ENCODE measurements at regions of chr6 and their contacts with region 1.

Region 1: GRCh38 chr6:5507131-5507681 is 245.9 kb downstream of the FARS2 start:
- DNase-seq: peak in 1 of 2 donors; percentile 51
- ATAC-seq: peak; percentile 83 to 93 (median 85)
- H3K4me3 ChIP-seq: peak overlapping the region; percentile 16
- H3K4me3 Mint-ChIP-seq: peak overlapping the region; percentile 87
- H3K27ac ChIP-seq: peak overlapping the region; percentile 76
- H3K27ac Mint-ChIP-seq: peak overlapping the region; percentile 89 to 90
- H3K4me1 ChIP-seq: peaks cover 23% of the 10 kb centered on the region
- H3K4me1 Mint-ChIP-seq: peaks cover 38 to 51% of the 10 kb centered on the region in 2 donors
- H3K27me3 ChIP-seq: no peaks in the 10 kb centered on the region
- H3K27me3 Mint-ChIP-seq: no peaks in the 10 kb centered on the region
- CTCF ChIP-seq: no peak

Region 2: DNA sequence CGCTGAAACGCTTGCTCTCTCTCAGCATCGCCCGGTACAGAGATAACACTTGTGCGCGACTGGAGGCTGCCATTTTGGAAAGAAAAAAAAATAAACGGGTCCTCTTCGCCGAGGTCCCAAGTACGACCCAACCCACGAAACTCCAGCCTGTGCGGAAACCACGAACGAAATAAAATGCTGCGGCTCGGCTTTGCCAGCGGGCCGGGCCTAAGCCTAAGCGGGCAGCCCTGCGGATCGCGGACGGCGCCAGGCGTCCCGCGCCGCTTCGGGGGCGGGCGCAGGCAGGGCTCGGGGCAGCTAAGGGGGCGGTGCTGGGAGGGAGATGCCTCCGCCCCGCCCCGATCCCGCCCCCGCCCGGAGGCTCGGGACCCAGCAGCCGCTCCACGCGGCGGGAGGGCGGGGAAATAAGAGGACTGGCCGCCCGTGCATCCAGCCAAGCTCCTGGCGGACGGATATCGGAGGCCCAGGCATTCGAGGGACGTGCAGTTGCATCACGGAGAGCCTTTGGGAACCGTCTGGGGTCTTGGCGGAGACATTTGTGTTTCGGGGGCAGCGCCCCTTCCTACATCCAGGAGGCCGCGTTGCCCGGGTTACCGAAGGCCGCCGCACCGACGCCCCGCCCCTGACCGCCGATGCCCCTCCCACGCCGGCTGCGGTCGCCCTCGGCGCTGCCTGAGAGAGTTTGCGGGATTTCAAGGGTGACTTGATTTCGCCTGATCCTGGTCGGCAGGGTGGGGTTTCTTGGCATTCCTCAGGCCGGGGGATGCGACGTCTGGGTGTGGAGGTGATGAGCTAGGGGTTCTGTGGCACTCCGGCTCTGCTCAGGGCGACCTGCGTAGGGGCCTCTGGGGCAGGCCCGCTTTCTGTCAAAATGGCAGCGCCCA is 246.3 kb before region 1 on chr6 and contains the starts of genes FARS2 and LYRM4:
- intact Hi-C with region 1: no loop called
- DNase-seq: peak; percentile 95
- ATAC-seq: peak; percentile 81 to 95 (median 84)
- H3K4me3 ChIP-seq: peak within 1 kb of the TSS; percentile 76
- H3K4me3 Mint-ChIP-seq: peak within 1 kb of the TSS; percentile 98
- H3K27ac ChIP-seq: peak within 1 kb of the TSS; percentile 86
- H3K27ac Mint-ChIP-seq: peak within 1 kb of the TSS; percentile 99 to 100
- H3K4me1 ChIP-seq: peaks cover 14% of the 10 kb centered on the region
- H3K4me1 Mint-ChIP-seq: peaks cover 19 to 22% of the 10 kb centered on the region in 2 donors
- H3K27me3 ChIP-seq: no peaks in the 10 kb centered on the region
- H3K27me3 Mint-ChIP-seq: no peaks in the 10 kb centered on the region
- CTCF ChIP-seq: peak; percentile 63
- total RNA-seq, gene FARS2: 15.3 to 24.8 (median 22.7) TPM
- total RNA-seq, gene LYRM4: 9.1 to 11.4 (median 11.1) TPM

Region 3: GRCh38 chr6:6008648-6009421 is 501.6 kb after region 1 on chr6:
- intact Hi-C with region 1: loop called (anchors 10 kb)
- DNase-seq: peak in 1 of 2 donors; percentile 57
- ATAC-seq: peak; percentile 68 to 73 (median 73)
- H3K4me3 ChIP-seq: peak overlapping the region; percentile 30
- H3K4me3 Mint-ChIP-seq: peak overlapping the region; percentile 91
- H3K27ac ChIP-seq: no peak overlapping the region
- H3K27ac Mint-ChIP-seq: peak overlapping the region in 1 of 2 donors; percentile 65
- H3K4me1 ChIP-seq: peaks cover 46% of the 10 kb centered on the region
- H3K4me1 Mint-ChIP-seq: peaks cover 52 to 54% of the 10 kb centered on the region in 2 donors
- H3K27me3 ChIP-seq: peaks cover 59% of the 10 kb centered on the region
- H3K27me3 Mint-ChIP-seq: peaks cover 58 to 75% of the 10 kb centered on the region in 2 donors
- CTCF ChIP-seq: no peak